PC-9 (cell line): ENCODE measurements at regions of chr5 and their contacts with region 1.

Region 1: DNA sequence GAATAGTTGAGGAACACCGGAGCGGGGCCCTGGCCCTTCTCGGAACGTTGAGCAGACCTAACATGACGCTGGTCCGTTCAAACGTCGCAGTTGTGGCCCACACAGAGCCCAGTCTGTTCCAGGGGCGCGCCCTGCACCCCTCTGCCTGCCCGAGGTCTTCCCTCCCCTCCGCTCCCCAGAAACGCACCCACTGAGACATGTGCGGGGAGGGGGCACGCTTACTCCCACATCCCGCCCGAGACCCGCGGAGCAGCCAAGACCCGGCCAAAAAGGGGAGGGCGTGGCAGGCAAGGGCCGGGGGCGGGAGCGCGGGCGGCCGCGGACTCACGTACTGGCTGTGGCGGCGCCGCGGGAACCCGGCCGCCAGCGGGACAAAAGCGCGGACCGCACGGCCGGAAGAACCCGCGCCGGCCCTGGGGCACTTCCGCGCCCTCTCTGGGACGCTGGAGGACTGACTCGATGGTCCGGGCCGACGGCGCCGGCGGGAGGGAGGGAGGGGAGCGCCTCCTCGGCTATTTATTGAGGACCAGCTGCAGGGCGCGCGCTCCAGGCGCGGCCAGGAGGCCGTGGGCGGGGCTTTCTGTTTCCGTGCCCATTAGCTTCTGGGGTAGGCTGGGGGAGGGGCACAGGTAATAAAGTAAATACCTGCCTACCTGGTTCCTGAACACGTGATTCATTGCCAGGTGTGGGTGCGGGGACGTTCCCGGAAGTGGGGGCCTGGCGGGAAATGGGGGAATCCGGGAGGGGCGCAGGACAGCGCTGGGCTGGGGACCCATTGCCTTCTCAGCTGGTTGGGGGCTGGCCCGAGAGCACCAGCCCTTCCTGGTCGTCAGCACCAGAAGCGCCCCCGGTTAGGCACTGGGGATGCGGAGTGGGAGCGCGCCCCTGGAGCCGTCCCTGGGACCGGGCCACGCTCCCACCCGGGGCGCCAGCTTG is at the start of gene ZFP62:
- DNase-seq: peak; percentile 83 to 96
- H3K4me3 ChIP-seq: peak within 1 kb of the TSS; percentile 98
- H3K27ac ChIP-seq: peak within 1 kb of the TSS; percentile 84
- H3K4me1 ChIP-seq: peaks cover 18% of the 10 kb centered on the region; the same call in 1 of the 2 replicates
- H3K27me3 ChIP-seq: no peaks in the 10 kb centered on the region
- CTCF ChIP-seq: peak; percentile 35; the same call in 1 of the 2 replicates
- total RNA-seq, gene ZFP62: 48.6 and 57.3 TPM in 2 replicates

Region 2: DNA sequence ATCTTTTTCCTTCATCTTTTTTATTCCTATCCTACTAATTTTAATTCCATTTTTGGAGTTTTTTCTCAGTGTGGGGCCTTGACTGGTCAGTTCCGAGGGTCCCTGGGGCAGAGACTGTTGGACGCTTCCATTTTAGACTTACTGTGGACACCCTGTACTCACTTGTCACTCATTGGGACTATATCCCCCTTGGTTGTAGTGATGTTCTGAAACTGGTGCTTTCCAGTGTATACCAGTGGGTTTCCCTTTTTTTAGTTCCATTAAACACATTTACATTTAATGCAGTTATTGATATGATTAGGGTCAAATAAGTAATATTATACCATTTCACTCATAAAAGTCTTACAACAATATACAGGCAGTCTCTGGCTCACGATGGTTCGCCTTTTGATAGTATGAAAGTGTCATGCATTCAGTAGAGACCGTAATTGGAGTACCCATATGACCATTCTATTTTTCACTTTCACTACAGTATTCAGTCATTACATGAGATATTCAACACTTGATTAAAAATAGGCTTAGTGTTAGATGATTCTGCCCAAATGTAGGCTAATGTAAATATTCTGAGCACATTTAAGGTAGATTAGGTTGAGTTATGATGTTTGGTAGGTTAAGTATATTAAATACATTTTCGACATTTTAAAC is 321.0 kb before region 1 on chr5:
- CTCF ChIA-PET with region 1: no interaction called
- POLR2A ChIA-PET with region 1: no interaction called
- intact Hi-C with region 1: no loop called
- DNase-seq: no peak
- H3K4me3 ChIP-seq: no peak overlapping the region
- H3K27ac ChIP-seq: no peak overlapping the region
- H3K4me1 ChIP-seq: no peaks in the 10 kb centered on the region
- H3K27me3 ChIP-seq: no peaks in the 10 kb centered on the region
- CTCF ChIP-seq: no peak

Region 3: DNA sequence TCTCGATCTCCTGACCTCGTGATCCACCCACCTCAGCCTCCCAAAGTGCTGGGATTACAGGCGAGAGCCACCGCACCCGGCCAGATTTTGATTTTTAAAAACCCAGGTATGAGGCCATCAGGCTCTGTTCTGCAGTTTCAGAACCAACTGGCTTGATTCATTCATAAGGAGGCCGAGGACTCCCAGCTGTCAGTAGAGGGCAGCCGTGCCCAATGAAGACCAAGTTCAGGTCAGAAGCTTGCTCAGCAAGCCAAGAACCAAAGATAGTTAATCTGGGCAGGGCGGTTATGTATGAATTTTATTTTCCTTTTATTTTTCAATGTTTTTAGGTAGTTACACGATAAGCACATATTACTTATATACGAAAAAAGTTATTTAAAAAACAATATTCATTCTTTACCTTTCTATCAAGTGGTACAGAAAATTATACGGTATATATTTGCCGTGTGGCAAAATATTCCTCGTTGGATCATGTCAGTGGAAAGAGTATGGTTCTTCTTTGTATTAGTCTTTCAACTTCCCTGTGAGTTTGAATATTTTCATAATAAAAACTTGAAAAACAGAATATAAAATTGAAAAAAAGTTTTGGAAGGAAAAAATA is 76.6 kb before region 1 on chr5:
- CTCF ChIA-PET with region 1: interaction called, 6 read pairs
- POLR2A ChIA-PET with region 1: no interaction called
- intact Hi-C with region 1: loop called (anchors 1 kb)
- DNase-seq: peak; percentile 43 to 72
- H3K4me3 ChIP-seq: no peak overlapping the region
- H3K27ac ChIP-seq: no peak overlapping the region
- H3K4me1 ChIP-seq: peaks cover 16% of the 10 kb centered on the region
- H3K27me3 ChIP-seq: no peaks in the 10 kb centered on the region
- CTCF ChIP-seq: peak; percentile 74

Region 4: DNA sequence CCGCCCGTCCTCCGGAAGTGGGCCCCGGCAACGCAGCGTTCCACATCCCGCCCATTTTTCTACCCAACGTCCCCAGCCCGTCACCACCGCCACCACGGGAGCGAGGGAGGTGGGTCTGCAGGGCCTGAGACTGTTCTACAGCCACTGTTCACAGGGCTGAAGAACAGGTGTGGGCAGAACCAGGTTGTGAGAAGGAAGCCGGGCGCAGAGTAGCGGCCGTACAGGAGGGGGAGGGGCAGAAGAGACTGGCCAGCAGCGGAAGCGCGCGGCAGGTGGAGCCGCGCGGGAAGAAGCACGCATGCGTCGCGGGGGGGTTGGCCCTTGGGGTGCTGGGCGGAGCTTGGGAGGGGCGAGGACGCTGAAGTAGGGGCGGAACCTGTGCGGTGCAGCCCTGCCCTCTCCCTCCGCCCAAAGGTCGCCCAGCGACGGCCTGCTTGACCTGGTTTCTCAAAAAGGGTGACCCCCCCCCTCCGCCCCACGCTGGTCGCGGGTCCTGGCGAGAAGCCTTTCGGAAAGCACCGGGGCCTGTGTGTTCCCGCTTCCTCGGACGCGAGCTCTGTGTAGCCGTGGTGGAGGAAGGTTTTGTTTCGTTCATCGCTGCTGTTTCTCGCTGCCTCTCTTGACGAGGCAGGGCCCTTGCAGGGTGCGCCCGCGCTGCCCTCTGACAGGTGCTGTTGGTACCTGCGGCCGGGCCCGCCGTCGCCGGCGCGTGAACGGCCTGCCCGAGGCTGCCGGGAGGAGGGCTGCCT is 50.8 kb before region 1 on chr5:
- CTCF ChIA-PET with region 1: no interaction called
- POLR2A ChIA-PET with region 1: interaction called, 8 read pairs
- intact Hi-C with region 1: loop called (anchors 1 kb)
- DNase-seq: peak; percentile 80 to 96
- H3K4me3 ChIP-seq: peak overlapping the region; percentile 95
- H3K27ac ChIP-seq: peak overlapping the region; percentile 91
- H3K4me1 ChIP-seq: peaks cover 55% of the 10 kb centered on the region
- H3K27me3 ChIP-seq: no peaks in the 10 kb centered on the region
- CTCF ChIP-seq: no peak

Region 5: DNA sequence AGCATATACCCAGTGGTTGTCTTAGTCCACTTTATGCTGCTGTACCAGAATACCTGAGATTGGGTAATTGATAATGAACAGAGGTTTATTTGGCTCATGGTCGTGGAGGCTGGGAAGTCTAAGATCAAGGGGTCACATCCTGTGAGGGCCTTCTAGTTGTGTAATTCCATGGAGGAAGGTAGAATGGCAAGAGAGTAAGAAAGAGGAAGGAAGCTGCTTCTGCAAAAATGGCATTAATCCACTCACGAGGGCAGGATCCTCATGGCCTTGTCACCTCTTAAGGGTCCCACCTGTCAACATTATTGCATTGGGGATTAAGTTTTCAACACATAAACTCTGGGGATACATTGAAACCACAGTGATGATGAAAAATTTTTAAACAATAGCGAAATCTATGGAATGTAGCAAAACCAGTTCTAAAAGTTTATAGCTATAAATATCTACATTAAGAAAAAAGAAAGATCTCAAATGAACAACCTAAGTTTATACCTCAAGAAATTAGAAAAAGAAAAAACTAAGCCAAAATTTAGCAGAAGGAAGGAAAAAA is 54.8 kb after region 1 on chr5:
- CTCF ChIA-PET with region 1: no interaction called
- POLR2A ChIA-PET with region 1: no interaction called
- intact Hi-C with region 1: no loop called
- DNase-seq: peak; percentile 4 to 67
- H3K4me3 ChIP-seq: no peak overlapping the region
- H3K27ac ChIP-seq: 0 out of 2 replicates have a peak overlapping the region, but pooled peaks have one; percentile 11
- H3K4me1 ChIP-seq: peaks cover 17% of the 10 kb centered on the region
- H3K27me3 ChIP-seq: peaks cover 5% of the 10 kb centered on the region
- CTCF ChIP-seq: no peak

Region 6: DNA sequence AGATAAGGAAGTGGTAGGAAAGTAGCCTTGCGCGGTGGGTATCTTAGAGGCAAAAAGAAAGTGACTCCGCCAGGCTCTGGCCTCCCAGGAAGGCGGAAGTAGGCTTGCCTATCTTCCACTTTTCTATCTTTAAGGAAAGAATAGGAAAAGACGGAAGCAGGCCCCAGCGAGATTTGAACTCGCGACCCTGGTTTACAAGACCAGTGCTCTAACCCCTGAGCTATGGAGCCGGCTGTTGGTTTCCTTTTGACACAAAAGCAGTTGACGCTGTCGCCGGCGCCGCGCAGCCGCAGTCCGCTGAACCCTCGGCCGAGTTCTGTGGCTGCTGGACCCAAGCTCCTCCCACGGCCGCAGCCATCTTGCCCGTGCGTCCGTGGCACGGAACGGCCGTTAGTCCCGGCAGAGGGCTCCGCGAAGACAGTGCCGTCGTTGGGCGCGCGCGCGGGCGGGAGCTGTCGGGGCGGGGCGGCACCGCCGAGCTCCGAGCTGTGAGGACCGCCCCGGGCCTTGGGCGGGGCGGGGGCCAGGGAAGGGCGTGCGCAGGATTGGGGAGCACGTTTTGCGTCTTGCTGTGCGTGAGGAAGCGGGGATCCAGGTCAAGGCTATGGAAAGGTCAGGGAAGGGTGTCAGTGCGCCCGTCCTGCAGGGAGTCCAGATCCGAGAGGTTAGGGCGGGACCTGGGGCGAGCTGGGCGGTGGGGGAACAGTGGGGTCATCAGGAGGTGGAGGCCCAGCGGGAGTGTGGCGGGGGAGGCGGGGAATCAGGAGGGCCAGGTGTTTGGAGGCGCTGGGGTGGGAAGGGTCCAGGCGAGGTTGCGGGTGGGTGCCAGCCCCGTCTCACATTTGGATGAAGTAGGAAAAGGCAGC is 330.6 kb after region 1 on chr5:
- CTCF ChIA-PET with region 1: no interaction called
- POLR2A ChIA-PET with region 1: no interaction called
- intact Hi-C with region 1: loop called (anchors 2 kb)
- DNase-seq: peak; percentile 87 to 97
- H3K4me3 ChIP-seq: peak overlapping the region; percentile 98
- H3K27ac ChIP-seq: peak overlapping the region; percentile 40; the same call in 1 of the 2 replicates
- H3K4me1 ChIP-seq: peaks cover 13% of the 10 kb centered on the region; the same call in 1 of the 2 replicates
- H3K27me3 ChIP-seq: no peaks in the 10 kb centered on the region
- CTCF ChIP-seq: no peak

Region 7: GRCh38 chr5:181234455-181235306 is 373.5 kb after region 1 on chr5:
- CTCF ChIA-PET with region 1: interaction called, 3 read pairs
- POLR2A ChIA-PET with region 1: interaction called, 23 read pairs
- intact Hi-C with region 1: no loop called
- DNase-seq: no peak
- H3K4me3 ChIP-seq: no peak overlapping the region
- H3K27ac ChIP-seq: peak overlapping the region; percentile 45
- H3K4me1 ChIP-seq: no peaks in the 10 kb centered on the region
- H3K27me3 ChIP-seq: no peaks in the 10 kb centered on the region
- CTCF ChIP-seq: no peak

Region 8: GRCh38 chr5:181260387-181261319 is 399.5 kb after region 1 on chr5 and contains the start of gene TRIM52:
- CTCF ChIA-PET with region 1: no interaction called
- POLR2A ChIA-PET with region 1: no interaction called
- intact Hi-C with region 1: loop called (anchors 5 kb)
- DNase-seq: peak; percentile 83 to 91
- H3K4me3 ChIP-seq: peak within 1 kb of the TSS; percentile 96
- H3K27ac ChIP-seq: peak within 1 kb of the TSS; percentile 66
- H3K4me1 ChIP-seq: peaks cover 36% of the 10 kb centered on the region
- H3K27me3 ChIP-seq: no peaks in the 10 kb centered on the region
- CTCF ChIP-seq: no peak
- total RNA-seq, gene TRIM52: 15.2 and 15.7 TPM in 2 replicates